Head of caudate nucleus (tissue), 42 donors: ENCODE measurements at regions of chr18 and their contacts with region 1.

Region 1: GRCh38 chr18:49858309-49859020 is 45.1 kb upstream of the ACAA2 start:
- DNase-seq: peak in 41 of 42 donors; percentile 36 to 89 (median 73)

Region 2: GRCh38 chr18:49510393-49511115 is 347.9 kb before region 1 on chr18:
- intact Hi-C with region 1: loop called (anchors 5 kb)
- DNase-seq: peak in 40 of 42 donors; percentile 18 to 80 (median 54)

Region 3: GRCh38 chr18:49555641-49556040 is 302.8 kb before region 1 on chr18:
- intact Hi-C with region 1: loop called (anchors 5 kb)
- DNase-seq: peak in 1 of 42 donors; percentile 27

Region 4: DNA sequence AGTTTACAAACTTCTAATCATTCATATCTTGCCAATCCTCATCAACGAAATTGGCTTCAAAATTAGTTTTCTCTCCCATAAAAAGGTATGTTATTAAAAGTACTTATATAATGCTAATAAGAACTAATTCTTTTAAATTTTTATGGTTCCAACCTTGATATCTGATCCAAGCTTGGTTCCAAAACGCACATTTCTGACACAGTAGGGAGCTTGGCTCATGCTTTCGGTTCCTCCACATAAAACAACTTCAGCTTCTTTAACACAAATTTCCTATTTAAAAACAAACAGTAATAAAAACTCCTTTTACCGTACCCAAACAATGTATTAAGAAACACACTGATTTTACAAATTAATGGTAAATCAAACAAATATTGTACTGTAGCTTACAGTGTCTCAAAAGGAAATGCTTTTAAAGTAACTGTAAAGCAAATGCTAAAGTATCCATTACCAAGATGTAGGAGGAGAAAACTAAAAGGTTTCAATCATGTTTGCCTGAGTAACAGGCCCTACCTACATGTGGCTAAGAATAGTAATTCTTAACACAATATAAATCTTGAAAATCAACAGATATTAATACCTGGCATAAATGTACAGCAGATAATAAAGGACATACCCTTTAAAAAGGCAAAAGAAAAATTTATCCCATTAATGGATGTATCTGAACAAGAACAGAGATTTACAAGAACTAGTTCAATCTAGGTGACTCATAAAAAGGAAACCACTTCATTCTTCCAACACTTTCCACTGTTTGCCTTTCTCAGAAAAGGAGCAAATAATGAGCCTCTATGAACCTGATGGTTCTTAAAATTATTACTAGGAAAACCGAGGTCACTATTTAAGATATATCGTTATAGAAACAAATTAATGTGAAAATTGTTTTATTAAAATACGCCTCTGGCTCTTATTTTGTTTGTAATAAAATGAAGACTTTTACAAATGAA is 62.6 kb before region 1 on chr18:
- intact Hi-C with region 1: no loop called
- DNase-seq: no peak

Region 5: DNA sequence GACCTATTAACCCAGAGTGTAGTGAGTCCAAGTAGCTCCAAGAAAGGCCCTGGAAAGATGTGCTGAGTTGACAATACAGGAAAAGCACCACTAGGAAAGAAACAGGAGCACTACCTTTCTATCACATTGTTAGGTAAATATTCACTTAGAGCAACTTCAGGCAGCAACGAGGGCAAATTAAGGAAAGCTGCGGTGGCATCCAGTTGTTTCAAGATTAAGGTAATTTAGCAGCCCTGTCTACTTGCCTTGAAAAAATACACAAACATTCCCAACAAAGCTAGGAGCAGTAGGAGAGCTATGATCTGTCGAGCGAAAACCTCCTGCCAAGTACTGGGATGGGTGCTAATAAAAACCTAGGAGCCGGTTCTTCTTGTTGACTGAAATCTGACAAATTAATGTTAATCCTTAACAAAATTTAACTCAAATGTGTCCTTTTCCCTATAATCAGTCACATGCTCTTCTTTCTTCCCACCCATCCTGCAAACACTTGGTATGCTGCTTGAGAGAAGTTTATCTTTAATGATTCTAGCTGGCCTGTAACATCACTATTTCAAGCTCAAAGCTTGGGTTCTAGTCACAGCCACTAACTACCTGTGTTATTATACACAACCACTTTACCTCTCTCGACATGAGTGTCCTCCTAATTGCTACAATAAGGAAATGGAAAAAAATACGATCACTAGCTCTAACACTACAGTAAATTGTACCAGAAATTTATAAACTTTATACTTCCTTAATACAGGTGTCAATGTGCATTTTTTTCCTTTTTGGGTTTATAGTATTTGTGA is 47.1 kb before region 1 on chr18:
- intact Hi-C with region 1: no loop called
- DNase-seq: no peak